Activated T-helper 2 cell treated with anti-CD3 and anti-CD28 coated beads, Interferon-gamma antibody, Interleukin-2, Interleukin-4, amounts not matched to agents 10 μg/mL and 5 μg/mL and 100 μg/mL, durations not matched to agents 14 hours and 24 hours and 36 hours (primary cell): ENCODE measurements at regions of chrX and their contacts with region 1.

Region 1: DNA sequence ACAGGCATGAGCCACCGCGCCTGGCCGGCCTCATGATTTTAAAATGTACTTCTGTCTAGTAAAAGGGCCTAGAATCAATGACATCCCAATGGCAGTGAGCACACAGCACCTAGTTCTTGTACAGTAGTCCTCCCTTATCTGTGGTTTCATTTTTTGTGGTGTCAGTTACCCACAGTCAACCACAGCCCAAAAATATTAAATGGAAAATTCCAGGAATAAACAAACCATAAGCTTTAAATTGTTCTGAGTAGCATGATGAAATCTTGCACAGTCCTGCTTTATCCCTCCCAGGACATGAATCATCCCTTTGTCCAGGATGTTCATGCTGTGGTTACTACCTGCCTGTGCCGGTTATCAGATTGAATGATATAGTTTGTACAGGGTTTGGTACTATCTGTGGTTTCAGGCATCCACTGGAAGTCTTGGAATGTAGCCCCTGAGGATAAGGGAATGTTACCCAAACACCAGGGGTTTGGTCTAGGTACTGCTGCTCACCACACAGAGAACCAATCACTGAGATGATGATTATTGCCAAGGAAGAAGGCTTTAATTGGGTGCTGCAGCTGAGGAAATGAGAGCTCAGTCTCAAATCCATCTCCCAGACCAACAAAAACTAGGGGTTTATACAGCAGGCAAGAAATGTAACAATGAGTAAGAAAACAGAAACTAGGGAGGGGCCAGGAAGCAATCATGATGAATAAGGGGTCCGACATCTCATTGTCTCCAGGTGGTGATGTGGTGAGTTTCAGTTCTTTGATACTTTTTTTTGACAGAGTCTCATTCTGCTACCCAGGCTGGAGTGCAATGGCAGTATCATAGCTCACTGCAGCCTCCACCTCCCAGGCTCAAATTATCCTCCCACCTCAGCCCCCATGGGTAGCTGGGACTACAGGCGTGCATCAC is 16.2 kb upstream of the FHL1 start:
- DNase-seq: no peak
- H3K4me3 Mint-ChIP-seq: no peak overlapping the region
- H3K27ac Mint-ChIP-seq: peak overlapping the region; percentile 25
- H3K4me1 Mint-ChIP-seq: peaks cover 12% of the 10 kb centered on the region
- H3K27me3 Mint-ChIP-seq: no peaks in the 10 kb centered on the region

Region 2: GRCh38 chrX:136147315-136147901 is 16.2 kb after region 1 on chrX and contains the start of gene FHL1:
- intact Hi-C with region 1: loop called (anchors 1 kb)
- DNase-seq: peak; percentile 18
- H3K4me3 Mint-ChIP-seq: peak within 1 kb of the TSS; percentile 81
- H3K27ac Mint-ChIP-seq: peak within 1 kb of the TSS; percentile 38
- H3K4me1 Mint-ChIP-seq: peaks cover 18% of the 10 kb centered on the region
- H3K27me3 Mint-ChIP-seq: peaks cover 15% of the 10 kb centered on the region
- total RNA-seq, gene FHL1: 4.5 and 8.1 TPM in 2 replicates